H1 (cell line): ENCODE measurements at regions of chr17 and their contacts with region 1.

Region 1: GRCh38 chr17:39235555-39236449 is 10.1 kb upstream of the STAC2 start:
- DNase-seq: peak; percentile 49 to 84
- H3K4me3 ChIP-seq: no peak overlapping the region
- H3K27ac ChIP-seq: no peak overlapping the region
- H3K4me1 ChIP-seq: peaks cover 0 to 14% (median 10%) of the 10 kb centered on the region in 4 experiments; a peak in 6 of 7 replicates
- H3K27me3 ChIP-seq: no peaks in the 10 kb centered on the region
- CTCF ChIP-seq: peak; percentile 94 to 100 (median 99)
- EP300 ChIP-seq: no peak
- POLR2A ChIP-seq: no peak
- RAD21 ChIP-seq: peak; percentile 45; a peak in 3 of 4 replicates

Region 2: DNA sequence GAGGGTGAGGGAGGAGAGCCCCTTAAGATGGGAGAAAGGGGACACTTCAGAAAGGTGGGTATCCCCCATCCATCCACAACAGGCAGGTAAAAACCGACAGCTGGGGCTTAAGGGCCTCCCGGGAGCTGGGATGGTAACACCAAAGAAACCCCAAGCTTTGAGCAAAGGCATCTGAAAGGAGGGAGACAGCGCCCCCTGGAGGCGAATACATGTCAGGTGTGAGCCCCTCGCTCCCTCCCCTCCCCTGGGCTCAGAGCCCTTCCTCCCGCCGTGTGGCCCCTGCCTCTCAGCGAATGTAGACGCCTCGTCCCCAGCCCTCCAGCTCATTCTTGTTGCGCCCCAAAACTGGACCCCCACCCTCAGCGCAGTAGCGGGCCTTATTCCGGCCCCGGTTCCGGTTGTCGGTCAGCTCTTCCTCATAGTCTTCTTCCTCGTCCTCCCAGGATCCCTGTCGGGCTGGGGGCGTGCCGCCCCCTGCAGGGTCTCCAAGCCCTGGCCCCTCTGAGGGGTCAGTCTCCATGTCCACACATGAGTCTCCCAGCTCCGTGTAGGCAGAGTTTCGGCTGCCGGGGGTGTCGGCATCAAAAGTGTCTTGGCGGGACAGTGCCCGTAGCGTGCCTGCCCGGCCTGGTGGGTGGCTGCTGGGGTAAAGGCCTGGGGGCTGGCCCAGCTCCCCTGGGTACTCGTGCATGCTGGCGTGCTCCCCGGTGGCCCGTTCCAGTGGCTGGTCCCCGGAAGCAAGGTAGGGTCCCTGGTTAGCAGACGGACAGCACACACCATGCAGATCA is 60.7 kb before region 1 on chr17:
- CTCF ChIA-PET with region 1: interaction called, 15 read pairs
- POLR2A ChIA-PET with region 1: interaction called, 4 read pairs
- DNase-seq: peak; percentile 82 to 92
- H3K4me3 ChIP-seq: peak overlapping the region in 1 of 4 experiments; percentile 22; a peak in 1 of 8 replicates
- H3K27ac ChIP-seq: no peak overlapping the region
- H3K4me1 ChIP-seq: peaks cover 0 to 14% (median 10%) of the 10 kb centered on the region in 4 experiments; a peak in 6 of 7 replicates
- H3K27me3 ChIP-seq: no peaks in the 10 kb centered on the region
- CTCF ChIP-seq: peak; percentile 87 to 92 (median 91)
- EP300 ChIP-seq: no peak
- POLR2A ChIP-seq: peak in 1 of 2 experiments; percentile 60; a peak in 1 of 3 replicates
- RAD21 ChIP-seq: peak; percentile 71 to 83